ENCODE measurements at regions of chrX and their contacts with region 1.

Region 1: DNA sequence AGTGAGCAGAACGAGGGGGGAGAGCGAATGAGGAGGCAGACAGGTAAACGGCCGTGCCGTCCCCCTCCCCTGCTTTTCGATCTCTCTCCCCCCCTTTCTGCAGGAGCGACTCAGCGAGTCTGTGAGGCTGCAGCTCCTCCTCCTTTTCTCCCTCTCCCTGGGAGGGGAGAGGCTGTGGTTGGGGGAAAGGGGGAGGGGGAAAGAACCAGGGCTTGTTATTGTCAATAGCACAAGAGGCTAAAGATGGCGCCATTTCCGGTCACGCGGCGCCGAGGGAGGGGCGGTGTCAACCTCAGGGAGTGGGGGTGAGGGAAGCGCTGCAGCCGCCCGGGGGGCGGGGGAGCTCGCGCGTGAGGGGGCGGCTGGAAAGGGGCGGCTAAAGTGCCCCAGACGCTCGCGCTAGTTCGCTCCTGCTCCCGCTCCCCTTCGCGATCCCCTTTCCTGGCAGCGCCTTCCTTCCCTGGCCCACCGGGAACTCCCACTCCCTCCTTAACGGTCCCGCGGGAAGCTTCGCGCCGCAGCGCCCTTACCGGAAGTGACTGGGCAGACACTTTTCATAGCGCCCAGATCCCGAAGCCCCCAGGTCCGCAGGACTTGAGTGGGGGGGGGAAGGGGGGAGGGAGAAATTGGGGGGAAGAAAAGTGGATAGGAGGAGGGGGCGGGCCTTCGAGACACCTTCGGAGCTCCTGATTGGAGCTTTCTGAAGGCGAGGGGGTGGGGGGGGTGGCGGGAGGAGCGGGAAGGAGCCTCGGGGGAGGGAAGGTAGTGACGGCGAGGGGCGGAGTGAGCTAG is at the start of gene CUL4B:
- DNase-seq: peak; percentile 83
- H3K4me3 ChIP-seq: peak within 1 kb of the TSS; percentile 73
- CTCF ChIP-seq: no peak

Region 2: DNA sequence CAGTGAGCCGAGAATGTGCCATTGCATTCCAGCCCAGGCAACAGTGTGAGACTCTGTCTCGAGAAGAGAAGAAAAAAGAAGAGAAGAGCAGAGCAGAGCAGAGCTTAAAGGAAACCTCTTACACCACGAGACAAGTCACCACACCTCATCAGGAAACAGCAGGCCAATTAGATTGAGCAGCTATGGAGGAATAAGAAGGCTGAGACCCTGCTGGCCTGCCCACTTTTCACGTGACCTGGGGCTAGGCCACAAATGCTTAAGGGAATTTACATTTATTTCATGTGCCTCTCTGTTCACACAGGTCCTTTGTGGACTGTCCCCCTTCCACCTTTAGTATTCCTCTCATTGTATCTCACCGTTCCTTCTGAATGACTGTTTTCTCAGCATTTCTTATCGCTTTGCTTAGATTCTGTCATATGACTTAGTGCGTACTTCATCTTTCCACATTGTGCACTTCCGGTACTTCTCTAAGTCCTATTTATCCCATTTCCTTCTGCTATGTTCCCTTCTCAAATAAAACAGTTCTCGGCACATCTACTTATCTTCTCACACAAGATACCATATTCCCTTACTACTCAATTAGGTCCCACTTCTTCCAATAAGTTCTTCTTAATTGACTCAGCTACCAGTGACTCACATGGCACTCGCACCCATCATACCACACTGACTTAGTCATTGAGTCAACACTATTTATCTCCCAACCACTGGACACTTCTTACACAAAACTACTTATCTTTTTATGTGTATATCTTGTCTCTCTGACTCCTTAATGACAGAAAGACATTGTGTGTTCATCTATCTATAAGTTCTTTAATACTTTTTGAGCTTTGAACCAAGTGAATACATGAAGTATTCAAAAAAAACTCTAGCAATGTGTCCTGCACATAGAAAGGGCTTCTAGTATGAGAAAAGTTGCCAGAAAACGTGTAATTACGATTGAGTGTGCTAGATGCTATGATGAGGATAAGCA is 11.3 kb before region 1 on chrX:
- CTCF ChIA-PET with region 1: interaction called, 4 read pairs
- POLR2A ChIA-PET with region 1: interaction called, 28 read pairs
- DNase-seq: peak; percentile 93
- H3K4me3 ChIP-seq: no peak overlapping the region
- CTCF ChIP-seq: no peak

Region 3: GRCh38 chrX:120603707-120604360 is 42.8 kb after region 1 on chrX and contains the start of gene MCTS1:
- CTCF ChIA-PET with region 1: no interaction called
- POLR2A ChIA-PET with region 1: interaction called, 12 read pairs
- DNase-seq: peak; percentile 85
- H3K4me3 ChIP-seq: peak within 1 kb of the TSS; percentile 67
- CTCF ChIP-seq: no peak